PC-3 (cell line): ENCODE measurements at regions of chr5 and their contacts with region 1.

Region 1: DNA sequence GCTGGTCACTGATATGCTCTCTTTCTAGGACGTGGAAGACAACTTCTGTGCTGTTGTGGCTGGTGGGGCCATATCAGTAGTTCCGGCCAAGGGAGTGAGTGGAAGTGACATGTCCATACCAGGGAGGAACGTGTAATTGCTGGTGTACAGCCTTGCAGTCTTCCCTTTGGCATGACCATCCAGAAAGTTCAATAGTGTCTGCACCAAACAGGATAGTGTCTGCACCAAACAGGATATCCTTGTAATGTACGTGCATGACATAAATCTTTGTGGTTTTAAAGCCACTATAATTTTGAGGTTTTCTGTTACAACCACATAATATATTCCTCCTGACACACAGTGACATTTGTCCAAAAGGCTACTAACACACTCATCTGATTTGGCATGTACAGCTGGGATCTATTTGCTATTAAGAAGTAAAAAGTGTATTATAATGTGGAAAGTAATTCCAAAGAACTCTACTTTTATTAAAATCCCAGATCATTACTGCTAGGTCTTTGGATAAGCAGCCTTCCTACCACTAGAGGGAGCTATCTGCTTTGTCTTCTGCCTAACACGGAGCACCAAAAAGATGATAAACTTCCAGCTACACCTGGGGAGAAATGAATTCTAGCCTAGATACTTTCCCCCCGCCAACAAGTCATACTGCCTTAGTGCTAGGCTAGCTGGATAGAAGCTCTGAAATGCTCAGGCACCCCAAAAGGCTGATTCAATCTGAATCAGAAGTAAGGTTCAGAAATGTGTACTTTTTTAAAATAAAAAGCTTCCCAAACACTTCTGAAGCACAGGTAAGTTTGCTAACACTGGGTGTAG is 52.7 kb downstream of the RNF145 start:
- DNase-seq: peak; percentile 73
- ATAC-seq: peak; percentile 85
- H3K4me3 ChIP-seq: no peak overlapping the region
- H3K27ac ChIP-seq: no peak overlapping the region
- H3K4me1 ChIP-seq: no peaks in the 10 kb centered on the region
- H3K27me3 ChIP-seq: no peaks in the 10 kb centered on the region
- CTCF ChIP-seq: peak; percentile 80

Region 2: GRCh38 chr5:159120446-159120845 is 36.2 kb before region 1 on chr5:
- CTCF ChIA-PET with region 1: no interaction called
- POLR2A ChIA-PET with region 1: no interaction called
- intact Hi-C with region 1: no loop called
- DNase-seq: no peak
- ATAC-seq: no peak
- H3K4me3 ChIP-seq: no peak overlapping the region
- H3K27ac ChIP-seq: no peak overlapping the region
- H3K4me1 ChIP-seq: no peaks in the 10 kb centered on the region
- H3K27me3 ChIP-seq: no peaks in the 10 kb centered on the region
- CTCF ChIP-seq: no peak

Region 3: GRCh38 chr5:159178978-159179377 is 22.3 kb after region 1 on chr5:
- CTCF ChIA-PET with region 1: interaction called, 3 read pairs
- POLR2A ChIA-PET with region 1: no interaction called
- intact Hi-C with region 1: loop called (anchors 2 kb)
- DNase-seq: peak; percentile 81
- ATAC-seq: peak; percentile 92
- H3K4me3 ChIP-seq: no peak overlapping the region
- H3K27ac ChIP-seq: peak overlapping the region; percentile 98
- H3K4me1 ChIP-seq: peaks cover 47% of the 10 kb centered on the region
- H3K27me3 ChIP-seq: no peaks in the 10 kb centered on the region
- CTCF ChIP-seq: no peak

Region 4: DNA sequence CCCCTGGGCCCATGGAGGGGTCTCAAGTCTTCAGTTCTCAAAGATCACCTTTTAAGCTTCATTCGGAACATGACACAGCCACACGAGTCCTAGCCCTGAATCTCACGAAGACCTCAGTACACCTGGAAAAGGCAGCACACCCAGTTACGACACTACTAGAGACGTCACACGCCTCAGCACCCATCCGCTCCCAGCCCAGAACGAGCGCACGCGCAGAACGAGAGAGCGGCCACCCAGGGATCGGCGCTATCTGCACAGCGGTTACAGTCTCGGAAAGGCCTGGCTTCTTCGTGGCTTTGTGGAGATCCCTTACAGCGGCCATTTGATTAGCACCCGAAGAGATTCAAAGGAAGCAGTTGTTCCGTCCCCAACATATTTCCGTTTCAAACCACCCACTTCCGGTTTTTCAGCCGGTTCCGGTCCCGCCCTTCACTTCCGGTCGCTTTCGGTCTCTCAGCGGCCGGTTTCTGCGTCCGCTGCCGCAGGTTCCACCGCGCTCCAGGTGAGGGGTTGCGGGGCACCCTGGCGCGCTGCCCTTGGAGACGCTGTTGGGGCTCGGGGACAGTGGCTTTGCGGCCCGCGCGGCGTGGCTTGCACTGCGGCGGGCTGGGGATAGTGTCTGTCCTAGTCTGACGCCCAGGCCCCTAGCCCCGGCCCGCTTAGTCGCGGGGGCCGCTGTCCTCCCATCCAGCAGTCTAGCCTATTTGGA is 106.4 kb after region 1 on chr5 and contains the start of gene UBLCP1:
- CTCF ChIA-PET with region 1: no interaction called
- POLR2A ChIA-PET with region 1: no interaction called
- intact Hi-C with region 1: loop called (anchors 5 kb)
- DNase-seq: peak; percentile 75
- ATAC-seq: peak; percentile 91
- H3K4me3 ChIP-seq: peak within 1 kb of the TSS; percentile 95
- H3K27ac ChIP-seq: peak within 1 kb of the TSS; percentile 97
- H3K4me1 ChIP-seq: peaks cover 15% of the 10 kb centered on the region
- H3K27me3 ChIP-seq: no peaks in the 10 kb centered on the region
- CTCF ChIP-seq: no peak
- total RNA-seq, gene UBLCP1: 8.9 and 9.5 TPM in 2 replicates

Region 5: GRCh38 chr5:159286420-159287035 is 129.9 kb after region 1 on chr5:
- CTCF ChIA-PET with region 1: interaction called, 5 read pairs
- POLR2A ChIA-PET with region 1: no interaction called
- intact Hi-C with region 1: loop called (anchors 2 kb)
- DNase-seq: peak; percentile 49
- ATAC-seq: no peak
- H3K4me3 ChIP-seq: no peak overlapping the region
- H3K27ac ChIP-seq: no peak overlapping the region
- H3K4me1 ChIP-seq: 0 out of 2 replicates have a peak, but pooled peaks cover 6% of the 10 kb centered on the region
- H3K27me3 ChIP-seq: no peaks in the 10 kb centered on the region
- CTCF ChIP-seq: peak; percentile 64

Region 6: DNA sequence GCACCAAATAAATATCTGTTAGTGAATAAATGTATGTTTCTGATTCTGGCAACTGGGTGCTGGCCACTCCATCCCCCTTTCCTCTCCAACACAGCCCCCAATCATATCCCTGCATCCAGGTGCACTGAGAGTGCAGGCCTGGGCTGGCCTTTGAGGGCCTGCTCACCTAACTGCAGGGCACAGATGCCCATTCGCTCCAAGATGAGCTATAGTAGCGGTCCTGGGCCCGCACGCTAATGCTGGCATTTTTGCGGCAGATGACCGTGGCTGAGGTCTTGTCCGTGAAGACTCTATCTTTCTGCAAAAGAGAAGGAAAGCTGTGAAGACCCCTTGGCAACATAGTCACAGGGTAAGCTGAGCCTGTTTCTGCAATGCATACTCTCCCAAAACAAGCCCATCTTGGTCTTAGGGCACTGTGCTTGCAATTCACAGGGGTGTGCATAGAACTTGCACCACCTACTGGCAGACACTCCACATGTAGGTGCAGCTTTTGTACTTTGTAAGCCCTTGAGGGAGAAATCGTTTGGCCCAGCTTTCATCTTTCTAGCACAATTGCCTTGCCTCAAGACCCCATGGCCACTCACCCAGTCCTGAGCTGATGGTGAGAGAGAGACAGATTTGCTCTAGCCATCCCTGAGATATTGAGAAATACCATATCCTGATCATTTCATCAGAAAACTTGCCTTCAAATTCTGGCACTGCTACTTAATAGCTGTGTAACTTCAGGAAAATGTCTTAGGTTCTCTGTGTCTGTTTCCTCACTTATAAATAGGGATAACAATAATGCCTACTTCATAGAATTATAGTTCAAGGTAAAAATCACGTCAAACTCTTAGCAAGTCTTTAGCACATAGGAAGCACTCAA is 160.1 kb after region 1 on chr5:
- CTCF ChIA-PET with region 1: interaction called, 13 read pairs
- POLR2A ChIA-PET with region 1: no interaction called
- intact Hi-C with region 1: loop called (anchors 1 kb)
- DNase-seq: peak; percentile 55
- ATAC-seq: peak; percentile 93
- H3K4me3 ChIP-seq: no peak overlapping the region
- H3K27ac ChIP-seq: no peak overlapping the region
- H3K4me1 ChIP-seq: peaks cover 10% of the 10 kb centered on the region
- H3K27me3 ChIP-seq: no peaks in the 10 kb centered on the region
- CTCF ChIP-seq: peak; percentile 82

Region 7: GRCh38 chr5:159695741-159696294 is 539.2 kb after region 1 on chr5:
- CTCF ChIA-PET with region 1: no interaction called
- POLR2A ChIA-PET with region 1: no interaction called
- intact Hi-C with region 1: no loop called
- DNase-seq: no peak
- ATAC-seq: no peak
- H3K4me3 ChIP-seq: no peak overlapping the region
- H3K27ac ChIP-seq: no peak overlapping the region
- H3K4me1 ChIP-seq: no peaks in the 10 kb centered on the region
- H3K27me3 ChIP-seq: no peaks in the 10 kb centered on the region
- CTCF ChIP-seq: no peak

Region 8: DNA sequence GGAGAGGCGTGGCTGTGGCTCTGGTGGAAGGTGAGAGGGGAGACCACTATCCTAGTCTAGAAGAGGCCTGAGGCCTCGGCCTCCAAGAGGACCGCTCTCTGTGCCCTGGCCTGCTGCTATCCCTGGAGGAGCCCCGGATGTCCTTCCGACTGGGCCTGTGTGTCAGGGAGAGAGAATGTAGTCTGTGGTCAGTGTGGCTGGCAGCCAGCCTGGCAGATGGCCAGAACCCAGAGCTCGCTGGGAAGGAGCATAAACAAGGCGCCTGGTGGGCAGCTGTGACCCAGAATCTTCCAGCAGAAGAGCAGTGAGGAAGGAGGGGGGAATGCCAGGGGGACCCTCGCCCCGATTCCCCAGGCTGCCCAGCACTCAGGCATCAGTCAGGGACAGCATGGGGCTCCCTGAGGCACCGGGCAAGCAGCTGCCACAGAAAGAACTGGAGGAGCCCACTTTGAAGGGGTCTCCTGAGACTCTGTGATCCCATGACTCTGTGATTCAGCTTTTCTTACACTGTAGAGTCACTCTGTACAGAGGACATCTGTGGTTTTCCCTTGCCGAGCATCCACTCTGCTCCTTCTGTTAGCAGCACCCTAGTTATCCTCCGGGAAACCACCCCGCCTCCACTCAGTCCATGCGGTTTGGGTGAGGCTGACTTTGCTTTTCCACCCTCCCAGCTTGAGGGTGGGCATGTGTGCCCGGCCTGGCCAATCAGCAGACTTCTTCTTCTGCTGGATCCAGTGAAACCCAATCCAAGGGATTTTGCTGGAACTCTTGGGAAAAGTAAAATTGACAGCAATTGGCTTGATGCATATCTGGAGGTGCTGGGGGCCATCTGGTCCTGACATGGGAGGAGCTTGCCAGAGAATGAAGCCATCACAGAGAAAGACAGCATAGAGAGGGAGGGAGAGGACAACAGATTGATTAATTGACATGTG is 1008.8 kb after region 1 on chr5:
- CTCF ChIA-PET with region 1: no interaction called
- POLR2A ChIA-PET with region 1: no interaction called
- intact Hi-C with region 1: no loop called
- DNase-seq: peak; percentile 98
- ATAC-seq: peak; percentile 92
- H3K4me3 ChIP-seq: peak overlapping the region; percentile 51
- H3K27ac ChIP-seq: peak overlapping the region; percentile 90
- H3K4me1 ChIP-seq: peaks cover 36% of the 10 kb centered on the region
- H3K27me3 ChIP-seq: no peaks in the 10 kb centered on the region
- CTCF ChIP-seq: no peak